ENCODE measurements at regions of chr4 and their contacts with region 1.

Region 1: GRCh38 chr4:112170451-112170993 is 25.3 kb downstream of the FAM241A start:
- DNase-seq: peak; percentile 91
- H3K4me3 Mint-ChIP-seq: peak overlapping the region; percentile 11
- H3K27ac Mint-ChIP-seq: peak overlapping the region; percentile 89
- H3K4me1 Mint-ChIP-seq: peaks cover 47% of the 10 kb centered on the region
- H3K27me3 Mint-ChIP-seq: no peaks in the 10 kb centered on the region
- CTCF ChIP-seq: no peak

Region 2: DNA sequence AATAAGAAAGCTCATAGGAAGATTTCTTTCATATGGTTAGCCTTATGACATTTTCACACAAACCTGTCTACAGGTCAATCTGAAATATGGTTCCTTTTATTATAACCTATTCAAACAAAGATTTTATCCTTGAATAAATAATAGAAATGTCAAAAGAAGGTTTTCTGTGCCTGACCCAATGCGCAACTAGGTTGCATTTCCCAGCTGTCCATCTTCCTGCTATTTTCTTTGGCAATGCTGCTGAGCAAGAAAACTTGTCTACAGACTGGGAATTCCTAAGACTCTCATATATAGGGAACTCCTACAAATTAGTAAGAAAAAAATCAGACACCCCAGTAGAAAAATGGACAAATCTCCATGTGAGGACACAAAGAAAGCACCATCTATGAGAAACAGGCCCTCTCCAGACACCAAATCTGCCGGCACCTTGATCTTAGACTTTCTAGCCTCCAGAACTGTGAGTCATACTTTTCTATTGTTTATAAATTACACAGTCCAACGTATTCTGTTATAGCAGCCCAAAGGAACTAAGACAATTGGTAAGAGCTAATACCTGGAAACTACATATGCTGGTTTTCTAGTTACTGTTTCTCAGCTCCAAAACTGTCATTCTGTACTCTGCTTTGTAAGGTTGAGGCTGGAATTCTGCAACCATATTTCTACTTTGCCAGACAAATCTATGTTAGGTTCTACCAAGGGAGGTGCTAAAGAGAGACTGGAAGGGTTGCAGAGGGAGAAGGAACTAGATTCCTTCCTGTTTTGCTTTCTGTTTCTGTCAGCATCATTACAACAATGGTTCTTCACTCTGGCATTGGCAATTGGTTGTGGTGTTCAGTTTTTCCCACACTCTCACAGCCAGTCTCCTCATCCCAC is 61.1 kb before region 1 on chr4:
- CTCF ChIA-PET with region 1: no interaction called
- POLR2A ChIA-PET with region 1: interaction called, 16 read pairs
- intact Hi-C with region 1: no loop called
- DNase-seq: peak; percentile 78
- H3K4me3 Mint-ChIP-seq: no peak overlapping the region
- H3K27ac Mint-ChIP-seq: no peak overlapping the region
- H3K4me1 Mint-ChIP-seq: peaks cover 16% of the 10 kb centered on the region
- H3K27me3 Mint-ChIP-seq: no peaks in the 10 kb centered on the region
- CTCF ChIP-seq: no peak

Region 3: DNA sequence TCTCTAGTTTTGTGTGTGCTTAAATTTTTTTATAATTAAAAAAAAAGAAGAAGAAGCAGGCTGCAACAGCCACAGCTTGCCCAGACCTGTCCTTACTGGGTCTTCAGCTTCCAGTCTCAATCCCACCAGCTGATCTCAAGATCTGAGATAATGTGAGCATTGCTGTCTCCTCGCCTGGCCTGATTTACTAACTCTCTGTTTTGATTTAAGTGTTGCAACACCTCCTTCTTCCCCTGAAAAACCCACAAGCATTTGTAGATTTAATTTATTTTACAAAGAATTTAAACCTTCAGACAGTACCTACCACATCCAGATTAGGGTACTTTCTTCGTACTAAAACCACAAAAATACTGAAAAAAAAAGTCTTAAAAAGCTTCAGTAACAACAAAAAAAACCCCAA is 12.7 kb after region 1 on chr4:
- CTCF ChIA-PET with region 1: interaction called, 6 read pairs
- POLR2A ChIA-PET with region 1: interaction called, 39 read pairs
- intact Hi-C with region 1: no loop called
- DNase-seq: no peak
- H3K4me3 Mint-ChIP-seq: no peak overlapping the region
- H3K27ac Mint-ChIP-seq: peak overlapping the region; percentile 88
- H3K4me1 Mint-ChIP-seq: peaks cover 15% of the 10 kb centered on the region
- H3K27me3 Mint-ChIP-seq: no peaks in the 10 kb centered on the region
- CTCF ChIP-seq: no peak

Region 4: GRCh38 chr4:112189754-112190153 is 19.2 kb after region 1 on chr4:
- CTCF ChIA-PET with region 1: interaction called, 6 read pairs
- POLR2A ChIA-PET with region 1: interaction called, 39 read pairs
- intact Hi-C with region 1: no loop called
- DNase-seq: no peak
- H3K4me3 Mint-ChIP-seq: no peak overlapping the region
- H3K27ac Mint-ChIP-seq: no peak overlapping the region
- H3K4me1 Mint-ChIP-seq: no peaks in the 10 kb centered on the region
- H3K27me3 Mint-ChIP-seq: no peaks in the 10 kb centered on the region
- CTCF ChIP-seq: peak; percentile 6

Region 5: GRCh38 chr4:112214390-112215264 is 44.1 kb after region 1 on chr4:
- CTCF ChIA-PET with region 1: interaction called, 3 read pairs
- POLR2A ChIA-PET with region 1: interaction called, 26 read pairs
- intact Hi-C with region 1: no loop called
- DNase-seq: peak; percentile 61
- H3K4me3 Mint-ChIP-seq: no peak overlapping the region
- H3K27ac Mint-ChIP-seq: peak overlapping the region; percentile 90
- H3K4me1 Mint-ChIP-seq: peaks cover 12% of the 10 kb centered on the region
- H3K27me3 Mint-ChIP-seq: no peaks in the 10 kb centered on the region
- CTCF ChIP-seq: peak; percentile 48

Region 6: DNA sequence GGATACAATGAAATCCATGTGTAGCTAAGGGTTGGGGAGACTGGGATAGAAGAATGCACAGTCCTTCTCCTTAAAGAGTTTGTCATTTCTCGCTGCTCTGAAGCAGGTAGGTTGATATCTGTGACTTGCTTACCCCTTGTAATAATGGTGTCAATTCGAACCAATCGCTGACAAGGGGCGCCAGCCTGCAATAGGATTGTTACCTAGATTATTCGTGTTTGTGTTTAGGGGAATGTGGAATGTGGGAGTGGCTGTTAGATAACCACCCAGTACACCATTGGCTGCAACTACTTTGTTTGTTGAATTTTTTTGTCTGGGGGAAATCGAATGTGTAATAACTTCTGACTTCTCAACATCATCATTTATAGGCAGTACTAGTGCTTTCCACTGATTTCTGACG is 608.0 kb after region 1 on chr4:
- CTCF ChIA-PET with region 1: no interaction called
- POLR2A ChIA-PET with region 1: no interaction called
- intact Hi-C with region 1: no loop called
- DNase-seq: no peak
- H3K4me3 Mint-ChIP-seq: no peak overlapping the region
- H3K27ac Mint-ChIP-seq: no peak overlapping the region
- H3K4me1 Mint-ChIP-seq: peaks cover 5% of the 10 kb centered on the region
- H3K27me3 Mint-ChIP-seq: no peaks in the 10 kb centered on the region
- CTCF ChIP-seq: no peak

Measured in MCF 10A (cell line).